Prostate gland (tissue), 2 donors: ENCODE measurements at regions of chr9 and their contacts with region 1.

Region 1: GRCh38 chr9:69925452-69925851 is 104.8 kb downstream of the CFAP95 start:
- DNase-seq: no peak
- H3K4me3 ChIP-seq: no peak overlapping the region
- H3K27ac ChIP-seq: no peak overlapping the region
- H3K4me1 ChIP-seq: no peaks in the 10 kb centered on the region
- H3K27me3 ChIP-seq: no peaks in the 10 kb centered on the region
- CTCF ChIP-seq: no peak
- POLR2A ChIP-seq: no peak

Region 2: GRCh38 chr9:69085569-69086283 is 839.7 kb before region 1 on chr9:
- intact Hi-C with region 1: no loop called
- DNase-seq: no peak
- H3K4me3 ChIP-seq: no peak overlapping the region
- H3K27ac ChIP-seq: no peak overlapping the region
- H3K4me1 ChIP-seq: no peaks in the 10 kb centered on the region
- H3K27me3 ChIP-seq: no peaks in the 10 kb centered on the region
- CTCF ChIP-seq: no peak
- POLR2A ChIP-seq: no peak

Region 3: DNA sequence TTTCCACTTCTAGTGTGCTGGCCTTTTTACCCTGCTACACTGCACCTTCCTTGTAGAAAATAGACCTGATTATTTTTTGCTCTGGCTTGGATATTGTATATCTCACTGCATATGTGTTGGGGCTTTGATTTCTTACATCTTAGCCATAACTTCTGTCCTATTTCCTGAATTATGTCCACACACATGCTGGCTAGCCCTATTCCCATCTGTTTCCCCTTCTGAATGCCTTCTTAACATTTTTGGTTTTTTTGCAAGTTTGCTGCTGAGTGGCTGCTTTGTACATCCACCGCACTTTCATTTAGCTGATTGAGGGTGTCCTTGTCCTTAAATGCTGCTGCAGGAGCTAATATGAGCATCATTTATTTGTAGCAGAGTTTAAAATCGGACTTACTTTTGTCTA is 78.0 kb before region 1 on chr9:
- intact Hi-C with region 1: no loop called
- DNase-seq: no peak
- H3K4me3 ChIP-seq: no peak overlapping the region
- H3K27ac ChIP-seq: no peak overlapping the region
- H3K4me1 ChIP-seq: no peaks in the 10 kb centered on the region
- H3K27me3 ChIP-seq: no peaks in the 10 kb centered on the region
- CTCF ChIP-seq: no peak
- POLR2A ChIP-seq: no peak

Region 4: DNA sequence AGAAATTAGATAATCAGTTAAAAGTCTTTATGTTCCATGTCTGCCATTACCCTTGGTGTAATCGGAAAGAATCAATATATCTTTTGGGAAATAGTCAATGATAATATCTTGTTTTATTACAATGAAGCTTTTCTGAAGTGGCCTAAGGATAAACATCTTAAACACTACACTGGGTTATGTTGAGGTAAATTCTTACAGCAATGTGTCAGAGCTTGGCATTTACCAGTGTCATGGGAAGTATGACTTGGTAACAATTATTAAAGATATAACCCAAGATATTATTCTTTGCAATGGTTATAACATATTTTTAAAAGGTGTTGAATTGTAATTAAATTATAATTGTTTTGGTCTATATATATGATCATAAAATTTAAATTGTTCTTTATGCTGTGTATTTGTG is 20.2 kb before region 1 on chr9:
- intact Hi-C with region 1: loop called (anchors 1 kb)
- DNase-seq: no peak
- H3K4me3 ChIP-seq: no peak overlapping the region
- H3K27ac ChIP-seq: no peak overlapping the region
- H3K4me1 ChIP-seq: no peaks in the 10 kb centered on the region
- H3K27me3 ChIP-seq: no peaks in the 10 kb centered on the region
- CTCF ChIP-seq: no peak
- POLR2A ChIP-seq: no peak